BJ (cell line): ENCODE measurements at regions of chr2 and their contacts with region 1.

Region 1: GRCh38 chr2:102166189-102166845 is 20.5 kb upstream of the IL1RL2 start:
- DNase-seq: peak; percentile 76
- H3K4me3 ChIP-seq: no peak overlapping the region
- H3K27me3 ChIP-seq: no peaks in the 10 kb centered on the region
- CTCF ChIP-seq: peak; percentile 70

Region 2: GRCh38 chr2:102005989-102006885 is 160.1 kb before region 1 on chr2:
- CTCF ChIA-PET with region 1: interaction called, 26 read pairs
- POLR2A ChIA-PET with region 1: no interaction called
- DNase-seq: no peak
- H3K4me3 ChIP-seq: no peak overlapping the region
- H3K27me3 ChIP-seq: no peaks in the 10 kb centered on the region
- CTCF ChIP-seq: peak; percentile 79

Region 3: GRCh38 chr2:102013206-102014040 is 152.9 kb before region 1 on chr2:
- CTCF ChIA-PET with region 1: interaction called, 11 read pairs
- POLR2A ChIA-PET with region 1: no interaction called
- DNase-seq: no peak
- H3K4me3 ChIP-seq: no peak overlapping the region
- H3K27me3 ChIP-seq: no peaks in the 10 kb centered on the region
- CTCF ChIP-seq: no peak

Region 4: DNA sequence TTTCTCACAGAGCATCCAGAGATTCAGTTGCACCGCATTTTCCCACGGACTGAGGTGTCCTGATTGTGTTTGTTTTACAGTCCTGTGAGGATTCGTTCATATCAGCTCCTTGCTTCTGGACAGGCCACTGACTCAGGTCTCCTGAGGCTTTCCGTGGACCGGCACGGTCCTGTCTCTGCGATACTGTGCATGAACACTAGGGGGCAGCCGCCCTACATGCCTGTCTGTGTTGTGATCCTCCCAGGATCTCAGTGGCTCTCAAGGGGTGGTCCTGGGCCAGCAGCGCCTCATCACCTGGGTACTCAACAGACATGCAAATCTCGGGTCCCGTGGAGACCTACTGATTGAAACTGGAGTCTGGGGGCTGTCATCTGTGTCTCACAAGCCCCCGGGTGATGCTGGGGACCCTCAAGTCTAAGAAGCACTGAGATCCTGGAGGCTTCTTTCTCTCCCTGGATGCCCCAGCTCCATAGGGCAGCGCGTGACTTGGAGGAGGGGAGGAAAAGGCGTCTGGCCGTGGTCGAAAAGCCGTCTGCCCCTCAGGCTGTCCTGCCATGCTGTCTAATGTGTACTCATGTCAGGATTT is 145.6 kb before region 1 on chr2:
- CTCF ChIA-PET with region 1: interaction called, 38 read pairs
- POLR2A ChIA-PET with region 1: no interaction called
- DNase-seq: no peak
- H3K4me3 ChIP-seq: no peak overlapping the region
- H3K27me3 ChIP-seq: no peaks in the 10 kb centered on the region
- CTCF ChIP-seq: peak; percentile 99

Region 5: GRCh38 chr2:102063941-102064678 is 102.2 kb before region 1 on chr2:
- CTCF ChIA-PET with region 1: interaction called, 10 read pairs
- POLR2A ChIA-PET with region 1: no interaction called
- DNase-seq: peak; percentile 95
- H3K4me3 ChIP-seq: no peak overlapping the region
- H3K27me3 ChIP-seq: no peaks in the 10 kb centered on the region
- CTCF ChIP-seq: no peak

Region 6: DNA sequence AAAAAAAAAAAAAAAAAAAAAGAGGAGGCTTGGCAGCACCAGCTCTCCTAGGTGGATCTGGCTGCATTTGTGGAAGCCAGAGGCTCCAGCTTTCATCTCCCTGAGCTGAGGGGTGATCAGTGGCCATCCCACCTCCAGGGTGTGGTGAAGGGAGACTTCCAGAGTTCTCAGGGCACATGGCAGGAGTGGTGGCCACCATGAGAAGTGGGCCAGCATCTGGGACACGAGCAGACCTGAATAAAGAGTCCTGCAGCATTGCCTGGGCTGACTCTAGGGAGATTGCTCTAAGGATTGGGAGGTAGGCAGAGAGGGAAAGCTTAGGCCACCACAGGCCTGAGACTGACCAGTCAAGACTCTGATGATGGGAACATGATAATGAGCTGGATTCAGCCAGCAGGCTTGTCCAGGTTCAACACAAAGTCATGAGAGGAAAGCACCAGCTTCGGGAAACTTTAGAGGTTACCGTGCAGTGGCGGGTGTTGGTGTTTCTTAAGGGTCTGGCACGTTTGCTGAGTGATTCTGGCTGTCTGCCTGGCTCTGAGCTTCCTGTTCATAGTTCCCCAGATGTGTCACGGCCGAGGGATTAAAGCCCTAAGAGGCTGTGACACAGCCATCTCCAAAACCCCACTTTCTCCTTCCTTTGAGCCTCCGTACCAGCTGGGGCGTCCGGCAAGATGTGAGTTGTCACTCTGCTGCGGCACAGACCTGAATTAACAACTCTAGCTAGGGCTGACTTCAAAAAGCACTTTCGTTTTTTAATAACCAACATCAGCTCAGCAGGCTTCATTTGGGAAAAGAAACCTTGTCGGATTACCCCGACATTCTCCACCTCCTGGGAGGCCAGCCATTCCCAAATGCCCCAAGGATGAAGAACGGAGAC is 62.1 kb before region 1 on chr2:
- CTCF ChIA-PET with region 1: no interaction called
- POLR2A ChIA-PET with region 1: no interaction called
- DNase-seq: peak; percentile 74
- H3K4me3 ChIP-seq: peak overlapping the region; percentile 39
- H3K27me3 ChIP-seq: no peaks in the 10 kb centered on the region
- CTCF ChIP-seq: no peak

Region 7: DNA sequence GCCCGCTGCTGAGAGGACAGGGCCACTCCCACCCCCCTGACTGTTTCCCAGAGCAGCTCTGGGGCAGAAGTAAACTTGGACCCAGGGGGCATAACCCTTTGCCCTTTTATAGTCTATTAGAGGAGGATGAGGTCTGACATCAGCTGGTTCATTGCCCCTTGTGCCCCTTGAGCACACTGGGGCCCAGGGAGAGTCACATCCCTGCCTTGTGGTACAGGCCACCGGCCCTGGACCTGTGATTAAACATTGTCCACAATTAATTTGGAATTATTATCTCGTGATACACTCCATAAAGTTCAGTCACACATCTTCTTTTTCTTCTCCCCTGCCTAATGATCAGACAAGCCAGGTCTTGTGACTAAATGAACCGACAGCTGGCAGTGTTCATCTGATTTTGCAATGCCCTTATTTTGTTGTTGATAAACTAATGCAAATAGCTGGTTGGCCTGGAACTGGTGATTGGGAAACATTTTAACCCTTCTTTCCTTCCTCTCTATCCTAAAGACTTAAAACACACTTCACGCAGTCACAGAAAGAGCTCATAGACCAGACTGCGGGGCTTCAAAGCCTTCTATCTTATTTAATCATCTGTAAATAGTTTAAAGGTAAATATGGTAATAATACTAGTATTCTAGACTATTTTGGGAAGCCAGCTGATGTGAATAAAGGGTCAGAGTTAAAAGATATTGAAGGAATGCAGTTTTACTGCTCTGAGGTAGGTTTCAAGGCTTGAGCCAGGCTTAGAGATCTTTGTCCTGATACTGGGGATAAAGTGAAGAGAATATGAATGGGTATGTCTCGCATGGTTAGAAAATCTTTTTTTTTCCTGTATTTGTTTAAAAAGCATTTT is 10.4 kb before region 1 on chr2:
- CTCF ChIA-PET with region 1: interaction called, 17 read pairs
- POLR2A ChIA-PET with region 1: no interaction called
- DNase-seq: no peak
- H3K4me3 ChIP-seq: no peak overlapping the region
- H3K27me3 ChIP-seq: no peaks in the 10 kb centered on the region
- CTCF ChIP-seq: no peak